ENCODE measurements at regions of chr10 and their contacts with region 1.

Region 1: DNA sequence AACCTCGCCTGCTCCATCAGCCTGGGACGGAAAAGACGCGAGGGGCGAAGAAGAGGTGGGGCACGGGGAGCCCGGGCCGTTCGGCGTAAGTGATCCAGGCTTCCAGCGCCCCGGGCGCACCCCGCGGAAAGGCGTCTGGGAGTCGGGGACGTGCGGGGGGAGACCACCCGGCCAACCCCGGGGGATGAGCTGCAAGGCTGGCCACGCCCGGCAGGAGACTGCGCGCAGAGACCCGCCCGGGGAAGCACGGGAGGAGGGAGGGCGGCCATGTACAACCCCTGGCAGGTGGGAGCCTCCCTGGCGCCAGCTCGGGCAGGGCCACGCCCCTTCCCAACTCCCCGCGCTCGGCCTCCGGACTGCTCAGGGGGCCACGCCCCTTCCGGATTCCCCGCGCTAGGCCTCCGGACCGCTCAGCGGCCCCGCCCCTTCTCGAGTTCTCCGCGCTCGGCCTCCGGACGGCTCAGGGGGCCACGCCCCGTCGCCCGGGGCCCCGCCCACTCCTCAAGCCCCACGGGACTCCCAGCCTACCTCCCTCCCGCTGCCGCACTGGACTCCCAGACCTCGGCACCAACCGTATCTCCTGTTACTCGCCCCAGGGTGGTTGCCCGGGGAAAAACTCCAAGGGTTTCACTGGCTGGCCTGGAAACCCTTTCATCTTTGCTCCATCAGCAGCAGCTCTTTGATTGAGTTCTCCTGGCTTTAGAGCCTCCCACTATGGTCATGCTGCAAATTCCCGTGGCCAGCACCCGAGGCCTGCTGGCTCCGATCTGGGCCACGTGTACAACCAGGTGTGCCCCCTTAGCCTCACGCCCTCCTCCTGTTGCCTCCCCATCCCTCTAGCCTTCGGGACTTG is 284.4 kb downstream of the ZEB1 start:
- DNase-seq: peak; percentile 97 to 98 (median 97)
- ATAC-seq: peak; percentile 93 to 97 (median 96)
- H3K4me3 ChIP-seq: peak overlapping the region; percentile 42 to 80 (median 66)
- H3K27ac ChIP-seq: peak overlapping the region; percentile 79 to 95 (median 90)
- H3K4me1 ChIP-seq: peaks cover 0 to 36% (median 15%) of the 10 kb centered on the region in 12 donors
- H3K27me3 ChIP-seq: no peaks in the 10 kb centered on the region
- CTCF ChIP-seq: peak in 6 of 12 donors; percentile 7 to 18 (median 11)
- POLR2A ChIP-seq: peak in 1 of 2 donors; percentile 64

Region 2: GRCh38 chr10:31157123-31158010 is 446.1 kb before region 1 on chr10:
- intact Hi-C with region 1: loop called in 1 of 10 experiments (anchors 5 kb)
- DNase-seq: peak; percentile 82 to 87 (median 86)
- ATAC-seq: peak; percentile 77 to 93 (median 90)
- H3K4me3 ChIP-seq: peak overlapping the region in 3 of 12 donors; percentile 0 to 12 (median 6)
- H3K27ac ChIP-seq: peak overlapping the region; percentile 12 to 83 (median 76)
- H3K4me1 ChIP-seq: peaks cover 3 to 36% (median 29%) of the 10 kb centered on the region in 12 donors
- H3K27me3 ChIP-seq: no peaks in the 10 kb centered on the region
- CTCF ChIP-seq: no peak
- POLR2A ChIP-seq: no peak

Region 3: DNA sequence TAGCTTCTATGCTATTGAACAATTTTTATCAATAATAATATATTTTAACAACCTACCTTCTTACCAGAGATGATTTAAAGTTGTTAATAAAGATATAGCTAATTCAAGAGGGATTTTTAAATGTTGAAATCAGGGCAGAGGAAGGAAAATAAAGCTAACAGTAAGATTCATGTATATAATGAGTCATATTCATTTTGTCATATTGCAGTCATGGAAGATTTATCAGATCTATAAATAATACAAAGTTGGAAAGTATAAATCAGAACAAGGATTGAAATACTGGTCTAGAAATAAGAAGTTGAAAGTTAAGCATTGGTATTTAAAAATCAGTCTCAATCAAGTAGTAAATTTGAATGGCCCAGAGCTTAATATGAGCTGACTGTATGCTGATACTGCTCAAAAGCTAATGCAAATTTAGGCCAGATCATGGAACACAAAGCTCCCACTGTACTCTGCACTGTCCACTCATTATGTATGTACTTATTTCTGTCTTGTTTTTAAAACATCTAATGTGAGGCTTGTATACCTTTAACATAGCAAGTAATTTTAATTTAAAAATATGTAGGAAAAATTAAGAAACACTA is 87.5 kb before region 1 on chr10:
- intact Hi-C with region 1: no loop called
- DNase-seq: no peak
- ATAC-seq: no peak
- H3K4me3 ChIP-seq: no peak overlapping the region
- H3K27ac ChIP-seq: no peak overlapping the region
- H3K4me1 ChIP-seq: peaks cover 0 to 22% (median 2%) of the 10 kb centered on the region in 12 donors
- H3K27me3 ChIP-seq: no peaks in the 10 kb centered on the region
- CTCF ChIP-seq: no peak
- POLR2A ChIP-seq: no peak

Region 4: DNA sequence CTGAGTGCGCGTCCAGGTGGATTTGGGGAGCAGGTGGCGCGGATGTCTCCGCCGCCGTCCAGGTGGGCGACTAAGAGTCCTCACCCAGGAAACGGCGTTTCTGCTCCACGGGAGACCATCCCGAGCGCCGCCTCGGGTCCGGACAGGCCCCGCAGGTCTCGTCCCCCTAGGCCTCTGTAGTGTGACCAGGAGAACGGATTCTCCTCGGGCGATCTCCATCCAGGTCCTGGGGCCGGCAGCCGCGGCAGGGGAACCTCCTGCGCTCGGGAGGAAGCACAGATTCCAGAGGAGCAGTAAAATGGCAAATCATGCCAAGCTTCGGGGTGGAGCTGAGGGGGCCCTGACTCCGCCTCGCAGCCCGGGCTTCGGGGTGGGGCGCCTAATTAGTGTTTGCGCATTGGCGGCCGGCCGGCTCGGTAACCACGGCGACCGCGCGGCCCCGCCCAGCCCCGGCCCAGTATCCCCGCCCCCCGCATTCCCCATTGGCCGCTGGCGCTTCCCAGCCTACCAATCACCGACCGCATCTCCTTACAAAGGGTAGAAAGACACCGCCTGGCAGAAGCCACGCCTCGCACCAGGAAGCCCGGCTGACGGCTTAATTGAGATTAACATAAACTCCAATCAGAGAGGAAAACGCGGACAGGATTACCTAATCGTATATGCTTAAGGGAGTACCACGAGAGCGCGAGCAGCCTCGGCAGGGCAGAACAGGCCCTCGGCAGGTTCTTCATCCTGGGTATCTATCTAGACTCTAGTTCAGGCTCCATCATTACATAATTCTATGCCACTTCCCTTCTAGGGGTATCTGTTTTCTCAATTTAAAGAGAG is 156.6 kb after region 1 on chr10:
- intact Hi-C with region 1: loop called in 5 of 10 experiments (anchors 1 to 10 kb)
- DNase-seq: peak; percentile 96 to 97 (median 97)
- ATAC-seq: peak; percentile 95 to 97 (median 97)
- H3K4me3 ChIP-seq: peak overlapping the region; percentile 68 to 98 (median 92)
- H3K27ac ChIP-seq: peak overlapping the region; percentile 91 to 100 (median 98)
- H3K4me1 ChIP-seq: peaks cover 0 to 44% (median 25%) of the 10 kb centered on the region in 12 donors
- H3K27me3 ChIP-seq: no peaks in the 10 kb centered on the region
- CTCF ChIP-seq: no peak
- POLR2A ChIP-seq: peak; percentile 78 to 96

Measured in heart left ventricle (tissue), 16 donors.